ENCODE measurements at regions of chr3 and their contacts with region 1.

Region 1: DNA sequence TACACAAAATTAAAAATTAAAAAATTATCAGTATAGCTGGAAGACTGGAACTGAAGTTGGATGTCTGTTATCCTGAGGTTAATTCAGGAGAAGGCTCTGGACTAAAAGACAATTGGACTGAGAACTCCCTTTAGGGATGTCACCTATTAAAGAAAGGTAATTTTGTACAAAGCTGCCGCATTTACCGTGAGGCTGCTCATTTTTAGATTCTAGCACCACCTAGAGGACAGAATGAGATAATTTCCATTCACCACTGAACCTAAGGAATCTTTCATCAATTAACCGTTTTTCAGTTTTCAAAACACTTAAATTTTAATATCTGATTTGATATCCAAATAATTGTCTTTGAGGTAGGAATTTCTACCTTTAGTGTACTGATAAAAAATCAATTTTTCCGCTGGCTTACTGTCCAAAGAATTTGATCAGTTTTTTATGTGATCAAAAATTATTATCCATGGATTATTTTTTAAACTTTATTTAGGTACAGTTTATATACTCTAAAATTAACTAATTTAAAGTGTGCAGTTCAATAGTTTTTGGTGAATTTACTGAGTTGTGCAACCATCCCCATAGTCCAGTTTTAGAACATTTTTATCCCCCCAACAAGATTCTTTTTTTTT is 106.7 kb upstream of the TNIK start:
- DNase-seq: no peak
- ATAC-seq: peak in 3 of 8 donors; percentile 25 to 46 (median 45)
- H3K4me3 ChIP-seq: no peak overlapping the region
- H3K27ac ChIP-seq: no peak overlapping the region
- H3K4me1 ChIP-seq: peaks cover 2 to 27% (median 11%) of the 10 kb centered on the region in 9 donors
- H3K27me3 ChIP-seq: no peaks in the 10 kb centered on the region
- CTCF ChIP-seq: peak; percentile 64 to 86 (median 82)

Region 2: DNA sequence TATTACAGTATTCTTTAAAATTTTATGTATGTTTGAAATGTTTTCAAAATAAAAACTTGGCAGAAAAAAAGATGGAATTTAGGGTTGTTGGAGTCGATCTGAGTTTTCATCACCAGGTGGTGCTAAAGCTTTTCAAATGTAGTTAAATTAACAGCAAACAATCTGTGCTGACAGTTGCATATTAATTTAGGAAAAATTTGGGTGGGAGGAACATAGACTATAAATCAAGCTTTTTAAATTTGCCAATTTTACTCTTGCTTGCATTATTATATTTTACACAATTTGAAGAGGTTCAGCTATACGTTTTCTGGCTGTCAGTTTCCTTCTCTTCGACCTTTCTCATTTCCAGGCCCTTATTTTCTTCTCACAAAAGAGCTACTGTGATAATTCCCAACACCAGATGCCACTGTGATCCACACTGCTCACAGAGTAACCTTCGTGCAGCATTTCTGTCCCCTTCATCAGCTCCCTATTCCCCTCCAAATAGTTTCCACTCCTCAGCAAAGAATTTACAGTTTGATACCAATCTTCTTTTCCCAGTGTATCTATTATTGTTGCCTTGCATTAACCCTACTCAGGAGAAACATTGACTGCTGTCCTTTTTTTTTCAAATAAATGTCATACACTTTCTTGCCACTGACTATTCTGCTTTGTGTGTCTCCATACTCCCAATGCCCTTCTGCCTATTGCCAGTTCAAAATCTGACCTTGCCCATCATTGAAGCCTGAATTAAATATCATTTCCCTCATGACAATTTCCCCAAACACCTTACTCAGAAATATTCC is 605.1 kb before region 1 on chr3:
- intact Hi-C with region 1: loop called (anchors 2 to 5 kb)
- DNase-seq: no peak
- ATAC-seq: peak in 3 of 8 donors; percentile 44 to 65 (median 52)
- H3K4me3 ChIP-seq: no peak overlapping the region
- H3K27ac ChIP-seq: no peak overlapping the region
- H3K4me1 ChIP-seq: peaks cover 0 to 12% (median 0%) of the 10 kb centered on the region in 9 donors
- H3K27me3 ChIP-seq: no peaks in the 10 kb centered on the region
- CTCF ChIP-seq: peak; percentile 53 to 75 (median 63)

Region 3: GRCh38 chr3:171142985-171143384 is 423.9 kb before region 1 on chr3:
- intact Hi-C with region 1: loop called in 1 of 10 experiments (anchors 10 kb)
- DNase-seq: no peak
- ATAC-seq: no peak
- H3K4me3 ChIP-seq: no peak overlapping the region
- H3K27ac ChIP-seq: no peak overlapping the region
- H3K4me1 ChIP-seq: peaks cover 0 to under 1% (median 0%) of the 10 kb centered on the region in 9 donors
- H3K27me3 ChIP-seq: no peaks in the 10 kb centered on the region
- CTCF ChIP-seq: no peak

Region 4: GRCh38 chr3:171187706-171188290 is 379.1 kb before region 1 on chr3:
- intact Hi-C with region 1: loop called in 6 of 10 experiments (anchors 5 to 10 kb)
- DNase-seq: peak in 1 of 2 donors; percentile 15
- ATAC-seq: peak in 7 of 8 donors; percentile 54 to 76 (median 68)
- H3K4me3 ChIP-seq: no peak overlapping the region
- H3K27ac ChIP-seq: peak overlapping the region in 1 of 10 donors; percentile 9
- H3K4me1 ChIP-seq: peaks cover 2 to 42% (median 26%) of the 10 kb centered on the region in 9 donors
- H3K27me3 ChIP-seq: no peaks in the 10 kb centered on the region
- CTCF ChIP-seq: peak; percentile 31 to 70 (median 63)

Region 5: DNA sequence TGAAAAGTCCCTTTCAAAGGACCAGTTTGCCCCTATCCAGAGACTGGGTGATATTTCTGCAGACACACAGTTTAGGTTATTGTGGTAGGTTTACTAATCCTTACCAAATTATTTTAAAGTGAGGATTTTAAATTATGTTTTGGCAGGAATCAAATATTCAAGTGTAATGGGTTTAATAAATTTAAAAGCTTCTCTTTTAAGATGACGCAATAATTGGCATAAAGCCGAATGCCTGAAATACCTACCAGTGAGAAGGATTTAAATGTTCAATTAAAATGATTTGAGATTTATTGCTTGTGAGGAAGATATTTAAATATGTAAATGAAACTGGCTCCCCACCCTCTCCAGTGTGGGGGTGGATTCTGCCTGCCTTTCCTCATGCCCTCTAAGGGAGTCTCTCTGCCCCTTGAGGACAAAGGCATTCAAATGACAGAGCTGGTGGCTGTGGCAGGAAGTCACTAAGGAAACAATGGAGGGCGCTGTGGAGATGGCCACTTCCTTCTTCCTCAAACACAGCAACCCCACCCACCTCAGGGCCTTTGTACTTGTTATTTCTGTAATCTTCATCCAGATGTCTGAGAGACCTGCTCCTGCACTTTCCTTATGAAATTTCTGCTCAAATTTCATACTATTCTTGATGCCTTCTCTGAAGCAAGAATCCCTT is 238.4 kb before region 1 on chr3:
- intact Hi-C with region 1: loop called in 1 of 10 experiments (anchors 10 kb)
- DNase-seq: no peak
- ATAC-seq: peak in 1 of 8 donors; percentile 41
- H3K4me3 ChIP-seq: no peak overlapping the region
- H3K27ac ChIP-seq: peak overlapping the region in 3 of 10 donors; percentile 6 to 59 (median 24)
- H3K4me1 ChIP-seq: peaks cover 5 to 69% (median 46%) of the 10 kb centered on the region in 9 donors
- H3K27me3 ChIP-seq: no peaks in the 10 kb centered on the region
- CTCF ChIP-seq: peak in 3 of 9 donors; percentile 7 to 42 (median 22)

Region 6: GRCh38 chr3:171358181-171358880 is 208.6 kb before region 1 on chr3:
- intact Hi-C with region 1: no loop called
- DNase-seq: no peak
- ATAC-seq: no peak
- H3K4me3 ChIP-seq: no peak overlapping the region
- H3K27ac ChIP-seq: no peak overlapping the region
- H3K4me1 ChIP-seq: peaks cover 0 to 21% (median 6%) of the 10 kb centered on the region in 9 donors
- H3K27me3 ChIP-seq: no peaks in the 10 kb centered on the region
- CTCF ChIP-seq: no peak

Measured in heart right ventricle (tissue), 16 donors.